ENCODE measurements at regions of chr11 and their contacts with region 1.

Region 1: DNA sequence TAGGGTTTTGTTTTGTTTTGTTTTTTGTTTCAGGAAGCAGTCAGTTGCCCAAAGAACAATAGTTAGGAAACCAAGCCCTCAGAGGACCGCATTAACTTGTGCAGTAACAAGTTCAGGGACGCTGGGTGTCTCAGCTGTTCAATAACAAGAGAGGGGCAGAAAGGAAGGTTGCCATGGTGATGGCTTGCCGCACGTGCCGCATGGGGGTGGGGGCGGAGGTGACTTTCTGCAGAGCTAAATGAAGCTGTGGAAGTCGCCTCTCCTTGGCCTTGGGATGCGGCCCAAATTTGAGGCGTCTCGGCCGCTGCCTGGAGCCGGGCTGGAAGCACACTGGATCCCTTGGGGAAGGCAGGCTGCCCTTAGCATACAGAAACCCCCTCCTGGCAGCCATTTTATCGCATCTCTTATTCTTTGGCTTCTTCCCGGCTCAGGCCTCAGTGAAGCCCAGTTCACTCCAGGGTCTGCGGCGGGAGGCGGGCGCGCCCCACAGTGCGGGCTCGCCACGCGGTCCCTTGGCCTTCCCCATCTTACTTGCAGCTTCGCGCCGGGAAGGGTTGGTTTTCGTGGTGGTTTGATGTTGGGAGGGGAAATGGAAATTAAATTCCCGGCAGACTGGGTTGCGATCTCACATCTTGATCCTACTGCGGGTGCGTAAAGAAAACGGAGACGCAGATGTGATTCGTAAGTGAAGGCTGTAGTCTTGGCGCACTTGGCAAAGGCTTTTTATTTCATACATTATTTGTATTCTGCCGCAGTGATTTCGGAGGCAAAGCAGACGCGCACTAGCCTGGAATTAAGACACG is 94.3 kb downstream of the SLC17A6 start:
- DNase-seq: no peak
- H3K4me3 Mint-ChIP-seq: no peak overlapping the region
- H3K27ac Mint-ChIP-seq: no peak overlapping the region
- H3K4me1 Mint-ChIP-seq: peaks cover 4% of the 10 kb centered on the region
- H3K27me3 Mint-ChIP-seq: peaks cover 22% of the 10 kb centered on the region

Region 2: GRCh38 chr11:22343371-22344032 is 89.0 kb before region 1 on chr11:
- intact Hi-C with region 1: loop called (anchors 5 kb)
- DNase-seq: no peak
- H3K4me3 Mint-ChIP-seq: no peak overlapping the region
- H3K27ac Mint-ChIP-seq: no peak overlapping the region
- H3K4me1 Mint-ChIP-seq: peaks cover 4% of the 10 kb centered on the region
- H3K27me3 Mint-ChIP-seq: peaks cover 64% of the 10 kb centered on the region

Measured in activated T-helper 2 cell treated with anti-CD3 and anti-CD28 coated beads, Interferon-gamma antibody, Interleukin-2, Interleukin-4, amounts not matched to agents 10 μg/mL and 5 μg/mL and 100 μg/mL, durations not matched to agents 14 hours and 24 hours and 36 hours (primary cell).